ENCODE measurements at regions of chr15 and their contacts with region 1.

Region 1: GRCh38 chr15:68316061-68316804 is 38.7 kb downstream of the FEM1B start:
- DNase-seq: no peak
- ATAC-seq: no peak
- H3K4me3 ChIP-seq: no peak overlapping the region
- H3K27ac ChIP-seq: no peak overlapping the region
- H3K4me1 ChIP-seq: no peaks in the 10 kb centered on the region
- H3K27me3 ChIP-seq: no peaks in the 10 kb centered on the region
- CTCF ChIP-seq: peak in 1 of 5 experiments; percentile 19
- POLR2A ChIP-seq: no peak

Region 2: DNA sequence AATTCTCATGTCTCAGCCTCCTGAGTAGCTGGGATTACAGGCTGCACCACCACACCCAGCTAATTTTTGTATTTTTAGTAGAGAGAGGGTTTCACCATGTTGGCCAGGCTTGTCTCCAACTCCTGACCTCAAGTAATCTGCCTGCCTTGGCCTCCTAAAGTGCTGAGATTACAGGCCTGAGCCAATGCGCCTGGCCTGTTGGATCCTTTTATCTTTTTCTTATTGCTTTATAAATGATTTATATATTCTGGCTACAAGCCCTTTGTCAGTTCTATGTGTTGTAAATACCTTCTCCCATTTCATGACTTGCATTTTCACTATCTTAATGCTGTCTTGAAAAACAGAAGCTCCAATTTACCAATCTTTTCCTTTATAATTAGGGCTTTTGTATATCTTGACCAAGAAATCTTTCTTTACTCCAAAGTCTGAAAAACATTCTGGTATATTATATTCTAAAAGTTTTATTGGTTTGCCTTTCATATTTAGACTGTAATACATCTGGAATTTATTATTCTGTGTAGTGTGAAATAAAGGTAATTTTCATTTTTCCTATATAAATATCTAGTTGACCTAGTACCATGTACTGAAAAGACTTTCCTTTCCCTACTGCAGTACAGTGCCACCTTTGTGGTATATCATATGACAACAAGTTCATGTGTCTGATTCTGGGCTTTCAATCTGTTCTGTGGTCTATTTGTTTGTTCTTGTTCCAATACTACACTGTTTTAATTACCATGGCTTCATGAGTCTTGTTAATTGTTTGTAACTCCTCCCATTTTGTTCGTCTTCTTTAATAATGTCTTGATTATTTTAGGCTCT is 423.5 kb before region 1 on chr15:
- in situ Hi-C with region 1: no loop called
- intact Hi-C with region 1: no loop called
- DNase-seq: peak; percentile 18 to 69
- ATAC-seq: peak; percentile 86 to 89
- H3K4me3 ChIP-seq: no peak overlapping the region
- H3K27ac ChIP-seq: peak overlapping the region in 3 of 4 donors; percentile 15 to 78 (median 50)
- H3K4me1 ChIP-seq: peaks cover 3 to 17% of the 10 kb centered on the region in 2 donors
- H3K27me3 ChIP-seq: no peaks in the 10 kb centered on the region
- CTCF ChIP-seq: no peak
- POLR2A ChIP-seq: no peak

Region 3: DNA sequence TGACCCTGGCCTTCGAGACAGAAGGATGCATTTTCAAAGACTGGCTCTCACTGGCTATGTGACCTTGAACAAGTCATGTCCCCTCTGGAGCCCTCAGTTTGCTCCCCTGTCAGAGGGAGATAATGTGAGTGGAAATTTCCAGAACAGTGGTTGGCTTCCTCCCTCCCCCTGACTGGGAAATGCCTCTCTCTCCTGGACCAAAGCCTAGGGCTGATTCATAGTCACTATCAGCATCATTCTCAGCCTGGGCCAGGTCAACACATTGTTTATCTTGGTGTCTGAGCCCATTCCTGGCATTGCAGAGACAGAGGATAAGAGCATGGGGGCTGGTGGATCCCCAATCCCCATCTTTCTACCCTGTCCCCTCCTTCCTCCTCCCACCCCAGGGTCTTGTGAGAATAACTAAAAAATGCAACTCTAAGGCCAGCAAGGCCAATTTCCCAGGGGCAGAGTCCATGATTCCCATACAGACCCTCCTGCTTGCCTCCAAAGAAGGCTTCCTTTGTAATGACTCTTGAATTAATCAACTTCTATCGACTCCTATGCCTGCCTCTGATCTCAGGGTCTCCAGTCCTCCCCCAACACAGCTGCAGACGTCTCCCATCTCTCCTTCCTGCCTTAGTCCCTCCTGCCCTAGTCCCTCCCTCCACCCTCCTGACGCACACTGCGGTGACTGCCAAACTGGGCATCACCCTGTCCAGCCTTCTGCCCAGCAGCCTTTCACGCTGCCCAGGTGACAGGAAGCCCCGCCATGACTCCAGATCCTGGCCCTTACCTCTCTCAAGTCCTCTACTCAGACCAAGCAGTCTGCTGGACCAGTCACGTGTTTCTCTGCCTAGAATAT is 227.2 kb after region 1 on chr15:
- in situ Hi-C with region 1: loop called in 1 of 4 experiments (anchors 25 kb)
- intact Hi-C with region 1: no loop called
- DNase-seq: peak; percentile 19 to 24
- ATAC-seq: peak; percentile 81 to 82
- H3K4me3 ChIP-seq: no peak overlapping the region
- H3K27ac ChIP-seq: no peak overlapping the region
- H3K4me1 ChIP-seq: peaks cover 0 to 4% of the 10 kb centered on the region in 2 donors
- H3K27me3 ChIP-seq: no peaks in the 10 kb centered on the region
- CTCF ChIP-seq: no peak
- POLR2A ChIP-seq: no peak

Region 4: DNA sequence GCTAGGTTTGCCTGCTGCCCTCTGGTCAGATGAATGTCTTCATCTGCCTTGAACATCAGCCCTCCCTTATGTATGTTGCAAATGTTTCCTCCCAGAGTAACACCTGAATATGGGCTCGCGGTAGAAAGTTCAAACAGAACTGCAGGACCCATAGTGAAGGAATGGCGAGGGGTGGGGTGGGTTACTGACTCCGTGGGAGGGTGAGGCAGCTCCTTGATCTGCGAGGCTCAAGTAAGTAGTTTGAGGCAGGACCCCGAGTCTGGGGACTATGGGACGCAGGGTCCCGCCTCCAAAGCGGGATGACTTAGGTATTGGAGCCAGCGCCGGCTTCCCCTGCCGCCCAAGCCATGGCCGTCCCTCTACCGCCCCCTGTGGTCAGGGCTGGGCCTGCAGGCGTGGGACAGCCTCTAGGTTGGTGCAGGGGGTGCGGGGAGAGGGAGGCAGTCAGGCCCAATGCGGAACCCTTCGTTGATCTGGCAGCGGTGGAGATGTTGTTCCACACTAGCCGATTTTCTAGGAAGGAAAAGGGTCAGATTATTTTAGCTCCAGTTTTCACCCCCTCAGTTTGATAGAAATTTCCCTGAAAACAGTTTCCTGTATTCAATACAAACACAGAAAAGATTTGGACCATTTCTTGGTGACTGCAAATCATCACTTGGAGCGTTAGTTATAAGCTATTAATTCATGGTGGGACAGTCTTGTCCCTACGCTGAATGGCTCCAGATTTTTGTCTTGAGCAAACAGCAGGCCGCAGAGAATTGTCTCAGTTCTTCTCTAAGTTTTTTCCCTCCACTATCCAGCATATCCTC is 334.9 kb after region 1 on chr15:
- in situ Hi-C with region 1: loop called in 1 of 4 experiments (anchors 25 kb)
- intact Hi-C with region 1: no loop called
- DNase-seq: no peak
- ATAC-seq: no peak
- H3K4me3 ChIP-seq: no peak overlapping the region
- H3K27ac ChIP-seq: no peak overlapping the region
- H3K4me1 ChIP-seq: no peaks in the 10 kb centered on the region
- H3K27me3 ChIP-seq: no peaks in the 10 kb centered on the region
- CTCF ChIP-seq: peak; percentile 20 to 63 (median 37)
- POLR2A ChIP-seq: no peak